ENCODE measurements at regions of chr11 and their contacts with region 1.

Region 1: GRCh38 chr11:122863704-122864326 is 18.7 kb upstream of the JHY start:
- DNase-seq: peak; percentile 60
- H3K4me3 ChIP-seq: no peak overlapping the region
- H3K27ac ChIP-seq: no peak overlapping the region; a peak in 1 of 4 replicates
- H3K4me1 ChIP-seq: no peaks in the 10 kb centered on the region
- H3K27me3 ChIP-seq: no peaks in the 10 kb centered on the region
- CTCF ChIP-seq: peak; percentile 99
- EP300 ChIP-seq: no peak
- RAD21 ChIP-seq: peak; percentile 90

Region 2: GRCh38 chr11:122628810-122629555 is 234.8 kb before region 1 on chr11:
- CTCF ChIA-PET with region 1: interaction called, 94 read pairs
- POLR2A ChIA-PET with region 1: no interaction called
- DNase-seq: peak; percentile 82
- H3K4me3 ChIP-seq: no peak overlapping the region
- H3K27ac ChIP-seq: peak overlapping the region in 1 of 2 experiments; percentile 34; a peak in 2 of 4 replicates
- H3K4me1 ChIP-seq: no peaks in the 10 kb centered on the region; a peak in 2 of 4 replicates
- H3K27me3 ChIP-seq: no peaks in the 10 kb centered on the region
- CTCF ChIP-seq: peak; percentile 86
- EP300 ChIP-seq: no peak
- RAD21 ChIP-seq: peak; percentile 84

Region 3: GRCh38 chr11:122668562-122669090 is 195.2 kb before region 1 on chr11:
- CTCF ChIA-PET with region 1: no interaction called
- POLR2A ChIA-PET with region 1: no interaction called
- DNase-seq: no peak
- H3K4me3 ChIP-seq: no peak overlapping the region
- H3K27ac ChIP-seq: no peak overlapping the region
- H3K4me1 ChIP-seq: peaks cover 0 to 3% of the 10 kb centered on the region in 2 experiments; a peak in 1 of 4 replicates
- H3K27me3 ChIP-seq: no peaks in the 10 kb centered on the region
- CTCF ChIP-seq: no peak
- EP300 ChIP-seq: no peak
- RAD21 ChIP-seq: no peak

Region 4: DNA sequence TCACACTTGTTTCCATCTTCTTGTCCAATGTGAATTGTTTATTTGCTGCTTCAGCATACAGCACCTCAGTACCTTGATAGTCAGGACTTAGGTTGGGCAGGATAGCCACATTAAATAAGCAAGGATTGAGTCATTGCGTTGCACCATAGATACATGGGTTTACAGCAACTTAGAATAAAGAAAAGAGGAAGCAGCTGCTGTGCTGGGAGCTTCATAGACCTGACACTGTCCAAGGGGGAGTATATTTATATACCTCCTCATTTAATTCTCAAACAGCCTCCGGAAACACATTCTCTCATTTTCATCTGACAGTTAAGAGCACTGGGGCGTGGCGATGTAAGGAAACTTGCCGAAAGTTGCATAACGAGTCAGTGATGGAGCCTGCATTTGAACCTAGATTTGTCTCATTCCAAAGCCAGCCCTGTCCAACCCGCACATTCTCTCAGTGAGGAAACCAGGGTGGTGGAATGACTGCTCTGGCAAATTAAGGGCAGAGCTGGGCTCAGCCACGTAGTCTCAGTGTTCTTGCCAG is 166.1 kb before region 1 on chr11:
- CTCF ChIA-PET with region 1: no interaction called
- POLR2A ChIA-PET with region 1: no interaction called
- DNase-seq: no peak
- H3K4me3 ChIP-seq: no peak overlapping the region
- H3K27ac ChIP-seq: no peak overlapping the region
- H3K4me1 ChIP-seq: peaks cover 0 to 8% of the 10 kb centered on the region in 2 experiments; a peak in 1 of 4 replicates
- H3K27me3 ChIP-seq: no peaks in the 10 kb centered on the region
- CTCF ChIP-seq: no peak
- EP300 ChIP-seq: no peak
- RAD21 ChIP-seq: no peak

Region 5: DNA sequence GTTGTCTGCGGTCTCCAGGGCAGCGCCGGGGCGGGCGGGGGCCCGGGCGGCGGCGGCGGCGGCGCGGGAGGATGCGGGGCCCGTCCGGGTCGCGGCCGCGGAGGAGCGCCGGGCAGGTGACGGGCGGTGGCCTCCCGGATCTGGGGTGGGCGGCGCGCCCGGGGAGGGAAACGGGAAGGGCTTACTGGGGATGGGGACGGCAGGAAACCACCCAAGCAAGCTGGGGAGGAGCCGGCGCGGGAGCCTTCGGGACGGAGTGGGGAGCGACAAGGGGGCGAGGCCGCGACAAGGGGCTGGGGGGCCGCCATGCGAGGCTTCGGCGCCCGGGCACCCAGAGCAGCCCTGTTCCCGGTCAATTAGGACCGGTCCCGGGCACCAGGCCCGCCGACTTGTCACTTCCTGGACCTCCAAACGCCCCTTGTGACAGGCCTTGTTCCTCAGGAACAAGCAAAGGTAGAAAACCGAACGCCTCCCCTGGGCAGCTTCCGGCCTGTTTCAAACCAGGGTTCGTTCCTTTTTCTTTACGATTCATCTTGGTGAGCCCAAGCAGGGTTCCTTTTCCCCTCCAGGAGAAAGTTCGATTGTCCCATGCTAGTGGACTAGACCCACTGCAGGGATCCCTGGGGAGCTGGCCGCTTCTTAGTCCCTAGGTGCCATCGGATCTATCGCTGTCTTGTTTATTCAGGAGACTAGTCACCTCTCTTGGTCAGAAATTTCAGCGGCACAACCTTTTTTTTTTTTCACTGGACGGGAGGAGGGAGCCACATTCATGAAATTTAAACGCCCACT is 19.2 kb after region 1 on chr11:
- CTCF ChIA-PET with region 1: interaction called, 33 read pairs
- POLR2A ChIA-PET with region 1: no interaction called
- DNase-seq: peak; percentile 86
- H3K4me3 ChIP-seq: peak overlapping the region; percentile 67 to 76
- H3K27ac ChIP-seq: peak overlapping the region; percentile 85 to 87
- H3K4me1 ChIP-seq: peaks cover 3 to 10% of the 10 kb centered on the region in 2 experiments; a peak in 3 of 4 replicates
- H3K27me3 ChIP-seq: no peaks in the 10 kb centered on the region
- CTCF ChIP-seq: no peak
- EP300 ChIP-seq: no peak
- RAD21 ChIP-seq: no peak

Region 6: DNA sequence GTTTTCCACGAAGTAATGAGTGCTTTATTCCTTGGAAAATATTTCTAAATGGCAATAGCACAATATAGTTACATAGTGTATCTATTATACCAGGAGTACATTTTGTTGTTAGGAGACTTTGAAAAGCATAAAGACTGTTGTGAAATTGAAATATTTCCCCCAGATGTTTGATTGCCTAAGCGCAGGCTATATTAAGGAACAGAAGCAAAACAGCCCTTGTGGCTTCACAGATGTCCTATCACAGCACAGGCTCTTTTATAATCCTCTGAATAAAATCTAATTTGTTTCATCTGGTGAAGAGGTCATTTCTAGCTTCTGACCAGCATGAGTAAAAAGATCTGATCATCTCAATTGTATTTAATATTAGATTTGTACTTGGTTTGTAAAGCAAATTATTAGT is 69.6 kb after region 1 on chr11:
- CTCF ChIA-PET with region 1: interaction called, 12 read pairs
- POLR2A ChIA-PET with region 1: no interaction called
- DNase-seq: peak; percentile 46
- H3K4me3 ChIP-seq: no peak overlapping the region
- H3K27ac ChIP-seq: no peak overlapping the region; a peak in 1 of 4 replicates
- H3K4me1 ChIP-seq: no peaks in the 10 kb centered on the region; a peak in 1 of 4 replicates
- H3K27me3 ChIP-seq: no peaks in the 10 kb centered on the region
- CTCF ChIP-seq: no peak
- EP300 ChIP-seq: no peak
- RAD21 ChIP-seq: no peak

Region 7: GRCh38 chr11:123020968-123021367 is 157.2 kb after region 1 on chr11:
- CTCF ChIA-PET with region 1: interaction called, 409 read pairs
- POLR2A ChIA-PET with region 1: no interaction called
- DNase-seq: peak; percentile 76
- H3K4me3 ChIP-seq: no peak overlapping the region
- H3K27ac ChIP-seq: no peak overlapping the region
- H3K4me1 ChIP-seq: no peaks in the 10 kb centered on the region
- H3K27me3 ChIP-seq: 0 out of 2 replicates have a peak, but pooled peaks cover 4% of the 10 kb centered on the region
- CTCF ChIP-seq: peak; percentile 63
- EP300 ChIP-seq: no peak
- RAD21 ChIP-seq: peak; percentile 78

Region 8: DNA sequence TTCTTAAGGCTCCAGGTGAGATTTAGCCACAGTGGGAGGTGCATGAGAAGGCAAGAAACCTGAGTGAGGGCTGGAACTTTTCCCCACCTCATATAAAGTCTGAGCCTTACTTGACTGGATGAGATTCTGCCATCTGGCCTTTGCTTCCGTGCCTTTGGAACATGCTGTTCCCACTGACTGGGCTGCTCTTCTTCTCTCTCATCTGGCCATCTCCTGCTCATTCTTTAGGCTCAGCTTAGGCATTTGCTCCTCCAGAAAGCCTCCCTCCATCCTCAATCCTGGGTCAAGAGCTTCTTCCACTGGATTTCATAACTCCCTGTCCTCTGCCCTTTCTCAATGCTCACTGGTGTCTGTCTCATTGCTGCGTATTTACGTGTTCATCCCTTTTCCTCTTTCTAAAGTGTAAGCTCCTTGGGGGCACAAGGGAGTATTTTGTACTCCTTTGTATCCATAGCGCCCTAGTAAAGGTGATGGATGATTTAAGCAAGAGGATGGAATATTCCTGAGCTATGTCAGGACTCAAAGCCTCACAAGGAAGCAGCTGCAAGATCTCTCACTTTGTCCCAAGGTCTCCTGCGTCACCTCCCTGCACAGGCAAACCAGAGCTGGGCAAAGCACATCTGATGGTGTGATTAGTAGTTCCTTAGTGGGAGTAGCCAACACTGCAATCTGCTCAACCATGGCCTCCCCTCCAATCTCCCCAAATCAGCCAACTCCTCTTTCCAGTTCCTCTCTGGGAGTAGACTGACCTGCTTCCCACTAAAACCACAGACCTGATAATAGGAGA is 182.9 kb after region 1 on chr11:
- CTCF ChIA-PET with region 1: interaction called, 64 read pairs
- POLR2A ChIA-PET with region 1: no interaction called
- DNase-seq: no peak
- H3K4me3 ChIP-seq: no peak overlapping the region
- H3K27ac ChIP-seq: no peak overlapping the region
- H3K4me1 ChIP-seq: no peaks in the 10 kb centered on the region
- H3K27me3 ChIP-seq: no peaks in the 10 kb centered on the region
- CTCF ChIP-seq: no peak
- EP300 ChIP-seq: no peak
- RAD21 ChIP-seq: no peak

Region 9: DNA sequence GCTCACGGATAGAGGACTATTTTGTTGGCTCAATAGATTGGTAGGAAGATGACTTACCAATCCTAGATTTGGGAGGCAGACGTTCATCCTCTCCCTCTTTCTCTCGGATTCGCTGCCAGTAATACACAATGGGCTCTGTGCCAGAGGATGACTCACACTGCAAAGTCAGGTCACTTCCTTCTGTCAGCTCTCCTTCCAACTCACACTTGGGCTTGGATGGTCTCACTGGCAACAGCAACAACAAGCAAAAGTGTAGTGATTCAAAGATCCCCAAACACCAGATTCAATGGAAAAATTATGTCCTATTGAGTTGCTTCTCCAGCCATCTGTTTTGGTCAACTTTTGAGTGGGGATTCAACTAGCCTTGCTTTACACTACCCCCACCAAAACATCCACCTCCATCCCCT is 219.8 kb after region 1 on chr11:
- CTCF ChIA-PET with region 1: no interaction called
- POLR2A ChIA-PET with region 1: no interaction called
- DNase-seq: peak; percentile 43
- H3K4me3 ChIP-seq: no peak overlapping the region
- H3K27ac ChIP-seq: peak overlapping the region; percentile 44 to 97
- H3K4me1 ChIP-seq: peaks cover 0 to 17% of the 10 kb centered on the region in 2 experiments
- H3K27me3 ChIP-seq: no peaks in the 10 kb centered on the region
- CTCF ChIP-seq: no peak
- EP300 ChIP-seq: peak in 1 of 2 experiments; percentile 40; a peak in 1 of 4 replicates
- RAD21 ChIP-seq: no peak

Measured in SK-N-SH (cell line).